ENCODE measurements at regions of chr15 and their contacts with region 1.

Region 1: GRCh38 chr15:74322181-74323076 is 45.0 kb downstream of the CYP11A1 start:
- DNase-seq: peak; percentile 29 to 46
- ATAC-seq: peak; percentile 29 to 35
- H3K4me3 ChIP-seq: no peak overlapping the region
- H3K27ac ChIP-seq: no peak overlapping the region
- H3K4me1 ChIP-seq: peaks cover 6 to 14% of the 10 kb centered on the region in 2 donors
- H3K27me3 ChIP-seq: no peaks in the 10 kb centered on the region
- CTCF ChIP-seq: peak; percentile 53 to 83 (median 77)
- POLR2A ChIP-seq: no peak

Region 2: GRCh38 chr15:73964736-73965093 is 357.7 kb before region 1 on chr15:
- in situ Hi-C with region 1: loop called in 1 of 4 experiments (anchors 25 kb)
- intact Hi-C with region 1: no loop called
- DNase-seq: peak; percentile 37 to 67
- ATAC-seq: peak; percentile 65 to 95
- H3K4me3 ChIP-seq: no peak overlapping the region
- H3K27ac ChIP-seq: no peak overlapping the region
- H3K4me1 ChIP-seq: no peaks in the 10 kb centered on the region
- H3K27me3 ChIP-seq: peaks cover 0 to 5% (median 0%) of the 10 kb centered on the region in 3 donors
- CTCF ChIP-seq: peak; percentile 75 to 95 (median 89)
- POLR2A ChIP-seq: no peak

Region 3: GRCh38 chr15:73972984-73973682 is 349.3 kb before region 1 on chr15:
- in situ Hi-C with region 1: loop called in 1 of 4 experiments (anchors 25 kb)
- intact Hi-C with region 1: loop called (anchors 5 kb)
- DNase-seq: peak; percentile 64 to 76
- ATAC-seq: peak; percentile 95 to 99
- H3K4me3 ChIP-seq: peak overlapping the region; percentile 19 to 35 (median 28)
- H3K27ac ChIP-seq: no peak overlapping the region
- H3K4me1 ChIP-seq: peaks cover 0 to 3% of the 10 kb centered on the region in 2 donors
- H3K27me3 ChIP-seq: peaks cover 0 to 3% (median 0%) of the 10 kb centered on the region in 3 donors
- CTCF ChIP-seq: peak; percentile 75 to 90 (median 87)
- POLR2A ChIP-seq: no peak

Region 4: GRCh38 chr15:74053941-74054529 is 268.4 kb before region 1 on chr15:
- in situ Hi-C with region 1: loop called in 1 of 4 experiments (anchors 10 kb)
- intact Hi-C with region 1: loop called (anchors 10 kb)
- DNase-seq: peak; percentile 50 to 75
- ATAC-seq: peak; percentile 73 to 77
- H3K4me3 ChIP-seq: no peak overlapping the region
- H3K27ac ChIP-seq: no peak overlapping the region
- H3K4me1 ChIP-seq: peaks cover 7 to 14% of the 10 kb centered on the region in 2 donors
- H3K27me3 ChIP-seq: no peaks in the 10 kb centered on the region
- CTCF ChIP-seq: peak in 3 of 5 experiments; percentile 34 to 73 (median 60)
- POLR2A ChIP-seq: no peak

Region 5: GRCh38 chr15:74127260-74127953 is 195.0 kb before region 1 on chr15:
- in situ Hi-C with region 1: no loop called
- intact Hi-C with region 1: loop called (anchors 1 kb)
- DNase-seq: peak; percentile 70 to 73
- ATAC-seq: peak; percentile 86 to 90
- H3K4me3 ChIP-seq: peak overlapping the region; percentile 43 to 57 (median 50)
- H3K27ac ChIP-seq: peak overlapping the region in 3 of 4 donors; percentile 27 to 59 (median 38)
- H3K4me1 ChIP-seq: peaks cover 0 to 19% of the 10 kb centered on the region in 2 donors
- H3K27me3 ChIP-seq: peaks cover 51 to 66% (median 53%) of the 10 kb centered on the region in 3 donors
- CTCF ChIP-seq: peak; percentile 91 to 99 (median 98)
- POLR2A ChIP-seq: no peak

Region 6: GRCh38 chr15:74615508-74616365 is 293.3 kb after region 1 on chr15 and contains the start of gene CLK3:
- in situ Hi-C with region 1: no loop called
- intact Hi-C with region 1: no loop called
- DNase-seq: peak; percentile 92 to 94
- ATAC-seq: peak; percentile 71 to 73
- H3K4me3 ChIP-seq: peak within 1 kb of the TSS; percentile 74 to 94 (median 86)
- H3K27ac ChIP-seq: peak within 1 kb of the TSS; percentile 94 to 100 (median 96)
- H3K4me1 ChIP-seq: peaks cover 34 to 39% of the 10 kb centered on the region in 2 donors
- H3K27me3 ChIP-seq: no peaks in the 10 kb centered on the region
- CTCF ChIP-seq: no peak
- POLR2A ChIP-seq: peak; percentile 86 to 89
- total RNA-seq, gene CLK3: 45.4 to 152 (median 105) TPM